Activated CD4-positive, alpha-beta T cell treated with anti-CD3 and anti-CD28 coated beads for 36 hours (primary cell): ENCODE measurements at regions of chr4 and their contacts with region 1.

Region 1: DNA sequence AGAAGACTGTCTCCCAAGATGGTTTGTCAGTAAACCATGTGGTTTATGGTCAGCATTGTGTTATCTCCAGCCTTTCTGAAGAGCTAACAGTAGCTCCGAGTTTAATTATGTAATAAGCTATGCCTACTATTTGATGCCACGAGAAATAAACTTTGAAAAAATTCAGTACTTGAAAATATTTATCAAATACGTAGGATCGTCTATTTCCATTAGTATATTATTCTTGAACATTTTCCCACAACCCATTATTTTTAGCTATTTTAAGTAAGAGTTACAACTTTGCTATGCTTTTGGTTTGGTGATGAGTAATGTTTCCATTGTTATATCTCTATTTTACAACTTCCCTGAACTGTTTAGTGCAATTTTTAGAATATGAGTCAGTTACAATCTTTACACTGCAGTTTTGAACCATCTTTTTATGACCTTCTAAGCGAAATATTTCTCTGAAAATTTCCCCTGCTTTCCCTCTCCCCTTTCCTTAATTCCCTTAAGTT is 44.5 kb upstream of the TRIM2 start:
- DNase-seq: no peak
- ATAC-seq: peak; percentile 79
- H3K4me3 Mint-ChIP-seq: peak overlapping the region; percentile 29
- H3K27ac Mint-ChIP-seq: peak overlapping the region; percentile 76
- H3K4me1 Mint-ChIP-seq: peaks cover 44% of the 10 kb centered on the region
- H3K27me3 Mint-ChIP-seq: peaks cover 3% of the 10 kb centered on the region

Region 2: GRCh38 chr4:153204247-153205027 is 44.7 kb after region 1 on chr4 and contains the start of gene TRIM2:
- CTCF ChIA-PET with region 1: no interaction called
- POLR2A ChIA-PET with region 1: no interaction called
- intact Hi-C with region 1: loop called (anchors 2 to 5 kb)
- DNase-seq: peak; percentile 20
- ATAC-seq: no peak
- H3K4me3 Mint-ChIP-seq: peak within 1 kb of the TSS; percentile 32
- H3K27ac Mint-ChIP-seq: peak within 1 kb of the TSS; percentile 62
- H3K4me1 Mint-ChIP-seq: peaks cover 33% of the 10 kb centered on the region
- H3K27me3 Mint-ChIP-seq: no peaks in the 10 kb centered on the region
- total RNA-seq, gene TRIM2: 1.0 to 1.6 TPM